AG04450 (cell line): ENCODE measurements at regions of chr18 and their contacts with region 1.

Region 1: GRCh38 chr18:28834889-28835288 is 658.0 kb upstream of the CDH2 start:
- DNase-seq: no peak
- H3K4me3 ChIP-seq: no peak overlapping the region
- H3K27ac ChIP-seq: no peak overlapping the region
- H3K27me3 ChIP-seq: no peaks in the 10 kb centered on the region
- CTCF ChIP-seq: no peak

Region 2: DNA sequence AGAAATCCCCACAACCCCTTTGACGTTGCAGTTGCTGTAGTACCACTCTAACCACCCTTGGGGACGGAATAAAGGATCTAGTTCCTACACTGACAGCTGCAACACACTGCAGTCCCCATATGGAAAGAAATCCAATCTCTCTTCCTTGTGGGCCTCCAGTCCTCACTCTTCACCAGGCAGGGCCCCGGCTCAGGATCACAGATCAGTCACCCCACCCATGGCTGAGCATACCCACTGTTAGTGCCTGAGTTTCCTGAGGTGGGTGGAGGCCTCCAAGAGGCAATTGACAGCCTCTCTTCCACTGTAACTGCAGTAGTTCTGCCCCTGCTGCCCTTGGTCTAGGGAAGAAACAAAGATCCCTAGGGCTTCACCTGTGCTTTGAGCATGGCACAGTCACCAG is 12.1 kb after region 1 on chr18:
- CTCF ChIA-PET with region 1: interaction called, 11 read pairs
- POLR2A ChIA-PET with region 1: no interaction called
- DNase-seq: no peak
- H3K4me3 ChIP-seq: no peak overlapping the region
- H3K27ac ChIP-seq: no peak overlapping the region
- H3K27me3 ChIP-seq: no peaks in the 10 kb centered on the region
- CTCF ChIP-seq: no peak